ENCODE measurements at regions of chr11 and their contacts with region 1.

Region 1: DNA sequence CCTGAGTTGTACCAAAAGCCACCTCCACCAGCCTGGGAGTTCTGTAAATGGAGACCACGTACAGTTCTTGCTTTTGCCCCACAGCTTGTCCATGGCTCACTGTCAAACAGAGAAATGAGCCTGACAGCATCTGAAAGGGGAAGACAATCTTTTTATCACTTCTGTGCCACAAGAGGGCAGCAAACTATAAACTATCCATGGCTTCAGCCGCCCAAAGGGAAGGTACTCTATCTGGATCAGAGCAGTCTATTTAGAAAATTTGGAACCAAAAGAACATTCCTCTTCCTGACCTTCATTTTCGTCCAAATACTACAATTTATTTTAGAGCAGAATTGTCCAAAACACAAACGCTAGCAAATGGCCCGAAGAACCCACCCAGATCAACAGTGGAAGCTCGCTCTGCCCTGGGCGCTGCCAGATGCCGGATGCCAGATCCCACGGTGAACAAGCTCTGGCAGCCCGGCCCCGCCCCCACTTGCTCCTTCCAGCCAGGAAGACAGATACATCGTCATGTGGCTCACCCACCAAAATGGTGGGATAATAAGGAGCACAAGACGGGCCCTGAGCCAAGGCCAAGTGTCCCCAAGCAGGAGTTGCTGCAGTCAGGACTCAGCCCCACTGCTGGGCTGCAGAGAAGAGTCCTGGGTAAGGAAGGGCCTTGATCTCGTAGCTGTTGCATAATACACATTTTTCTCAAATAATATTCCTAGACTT is 23.9 kb upstream of the SCGB1A1 start:
- DNase-seq: peak; percentile 78
- ATAC-seq: peak; percentile 71
- H3K4me3 Mint-ChIP-seq: peak overlapping the region; percentile 59
- H3K27ac Mint-ChIP-seq: no peak overlapping the region; the same call in 1 of the 2 replicates
- H3K4me1 Mint-ChIP-seq: peaks cover 22% of the 10 kb centered on the region
- H3K27me3 Mint-ChIP-seq: no peaks in the 10 kb centered on the region
- CTCF ChIP-seq: peak; percentile 61

Region 2: DNA sequence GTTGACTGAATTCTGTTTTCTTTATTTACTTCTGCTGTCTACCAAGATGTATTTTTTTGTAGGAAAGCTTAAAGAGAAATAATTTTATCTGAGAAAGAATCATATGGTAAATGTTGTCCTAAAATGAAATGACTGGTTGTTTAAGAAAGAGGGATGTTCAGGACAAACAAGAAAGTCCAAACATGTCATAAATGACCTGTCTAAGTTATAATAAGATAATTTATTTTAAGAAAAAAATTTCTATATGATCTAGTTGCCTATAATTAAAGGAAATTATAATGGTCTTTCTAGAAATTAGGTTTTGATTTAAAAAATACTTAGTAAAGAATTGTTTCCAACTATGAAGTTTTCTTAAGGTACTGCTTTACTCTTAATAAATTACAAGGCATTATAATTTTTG is 114.5 kb before region 1 on chr11:
- CTCF ChIA-PET with region 1: no interaction called
- POLR2A ChIA-PET with region 1: no interaction called
- DNase-seq: no peak
- ATAC-seq: no peak
- H3K4me3 Mint-ChIP-seq: no peak overlapping the region
- H3K27ac Mint-ChIP-seq: no peak overlapping the region
- H3K4me1 Mint-ChIP-seq: 0 out of 2 replicates have a peak, but pooled peaks cover 3% of the 10 kb centered on the region
- H3K27me3 Mint-ChIP-seq: peaks cover 4% of the 10 kb centered on the region; the same call in 1 of the 2 replicates
- CTCF ChIP-seq: no peak

Region 3: GRCh38 chr11:62419314-62419929 is 24.4 kb after region 1 on chr11:
- CTCF ChIA-PET with region 1: interaction called, 138 read pairs
- POLR2A ChIA-PET with region 1: no interaction called
- DNase-seq: no peak
- ATAC-seq: no peak
- H3K4me3 Mint-ChIP-seq: no peak overlapping the region
- H3K27ac Mint-ChIP-seq: no peak overlapping the region
- H3K4me1 Mint-ChIP-seq: no peaks in the 10 kb centered on the region
- H3K27me3 Mint-ChIP-seq: peaks cover 38% of the 10 kb centered on the region
- CTCF ChIP-seq: no peak

Region 4: GRCh38 chr11:62487738-62488551 is 93.0 kb after region 1 on chr11:
- CTCF ChIA-PET with region 1: interaction called, 13 read pairs
- POLR2A ChIA-PET with region 1: no interaction called
- DNase-seq: no peak
- ATAC-seq: no peak
- H3K4me3 Mint-ChIP-seq: no peak overlapping the region
- H3K27ac Mint-ChIP-seq: no peak overlapping the region
- H3K4me1 Mint-ChIP-seq: no peaks in the 10 kb centered on the region
- H3K27me3 Mint-ChIP-seq: no peaks in the 10 kb centered on the region; the same call in 1 of the 2 replicates
- CTCF ChIP-seq: no peak

Region 5: DNA sequence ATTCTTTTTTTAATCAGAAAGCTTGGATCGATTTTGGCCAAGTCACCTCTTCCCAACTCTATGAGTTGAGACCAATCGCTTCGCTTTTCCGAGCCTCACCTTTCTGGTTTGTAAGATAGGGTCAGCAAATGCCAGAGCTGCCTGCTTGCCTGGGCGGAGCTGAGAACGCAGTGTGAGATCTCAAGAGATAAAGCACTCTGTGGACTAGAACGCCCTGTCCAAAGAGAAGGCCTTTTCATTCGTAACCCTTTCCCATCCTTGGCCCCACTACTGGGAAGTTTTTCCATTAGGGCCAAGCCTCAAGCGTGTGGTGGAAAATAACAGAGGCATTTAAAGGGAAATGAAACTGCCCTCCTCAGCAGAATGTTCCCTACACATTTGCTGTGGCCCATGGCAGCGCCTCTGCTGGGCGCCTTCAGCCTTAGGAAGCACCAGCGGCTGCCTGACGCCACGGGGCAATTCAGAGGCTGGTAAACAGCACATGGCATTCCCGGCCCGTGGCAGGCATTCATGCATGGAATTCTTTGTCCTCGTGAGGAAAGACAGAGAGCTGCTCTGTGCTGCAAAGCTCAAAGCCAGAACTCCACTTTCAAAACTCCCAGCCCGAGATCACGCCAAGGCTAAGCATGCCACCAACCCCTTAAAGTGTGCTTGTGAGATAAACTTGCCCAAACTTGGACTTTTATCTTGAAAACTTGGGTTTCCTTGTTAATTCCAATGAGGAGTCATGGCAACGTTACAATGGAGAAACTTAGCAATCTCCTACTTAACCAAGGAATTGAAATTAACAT is 113.5 kb after region 1 on chr11:
- CTCF ChIA-PET with region 1: interaction called, 25 read pairs
- POLR2A ChIA-PET with region 1: no interaction called
- DNase-seq: peak; percentile 75
- ATAC-seq: peak; percentile 75
- H3K4me3 Mint-ChIP-seq: peak overlapping the region; percentile 32
- H3K27ac Mint-ChIP-seq: peak overlapping the region; percentile 71
- H3K4me1 Mint-ChIP-seq: peaks cover 37% of the 10 kb centered on the region
- H3K27me3 Mint-ChIP-seq: peaks cover 42% of the 10 kb centered on the region
- CTCF ChIP-seq: no peak

Region 6: GRCh38 chr11:62573592-62574362 is 178.8 kb after region 1 on chr11 and contains the start of gene EEF1G:
- CTCF ChIA-PET with region 1: interaction called, 16 read pairs
- POLR2A ChIA-PET with region 1: interaction called, 3 read pairs
- DNase-seq: peak; percentile 98
- ATAC-seq: peak; percentile 97
- H3K4me3 Mint-ChIP-seq: peak within 1 kb of the TSS; percentile 99
- H3K27ac Mint-ChIP-seq: peak within 1 kb of the TSS; percentile 96
- H3K4me1 Mint-ChIP-seq: peaks cover 37% of the 10 kb centered on the region
- H3K27me3 Mint-ChIP-seq: no peaks in the 10 kb centered on the region
- CTCF ChIP-seq: no peak
- total RNA-seq, gene EEF1G: 1,667 to 1,857 TPM (median 1,846 TPM) in 3 replicates